ENCODE measurements at regions of chr13 and their contacts with region 1.

Region 1: GRCh38 chr13:41111454-41111853 is 21.1 kb downstream of the KBTBD6 start:
- DNase-seq: no peak
- ATAC-seq: no peak
- H3K4me3 ChIP-seq: no peak overlapping the region
- H3K27ac ChIP-seq: no peak overlapping the region
- H3K4me1 ChIP-seq: no peaks in the 10 kb centered on the region
- H3K27me3 ChIP-seq: no peaks in the 10 kb centered on the region
- CTCF ChIP-seq: no peak

Region 2: GRCh38 chr13:41203810-41204209 is 92.4 kb after region 1 on chr13:
- CTCF ChIA-PET with region 1: no interaction called
- POLR2A ChIA-PET with region 1: no interaction called
- intact Hi-C with region 1: no loop called
- DNase-seq: no peak
- ATAC-seq: no peak
- H3K4me3 ChIP-seq: no peak overlapping the region
- H3K27ac ChIP-seq: no peak overlapping the region
- H3K4me1 ChIP-seq: no peaks in the 10 kb centered on the region
- H3K27me3 ChIP-seq: no peaks in the 10 kb centered on the region
- CTCF ChIP-seq: no peak

Region 3: GRCh38 chr13:41216160-41216559 is 104.7 kb after region 1 on chr13:
- CTCF ChIA-PET with region 1: interaction called, 10 read pairs
- POLR2A ChIA-PET with region 1: no interaction called
- intact Hi-C with region 1: no loop called
- DNase-seq: peak; percentile 55
- ATAC-seq: peak; percentile 93
- H3K4me3 ChIP-seq: no peak overlapping the region
- H3K27ac ChIP-seq: peak overlapping the region; percentile 45; the same call in 1 of the 2 replicates
- H3K4me1 ChIP-seq: peaks cover 10% of the 10 kb centered on the region
- H3K27me3 ChIP-seq: no peaks in the 10 kb centered on the region
- CTCF ChIP-seq: no peak

Region 4: GRCh38 chr13:41944635-41945397 is 833.4 kb after region 1 on chr13:
- CTCF ChIA-PET with region 1: no interaction called
- POLR2A ChIA-PET with region 1: interaction called, 10 read pairs
- intact Hi-C with region 1: no loop called
- DNase-seq: peak; percentile 20
- ATAC-seq: peak; percentile 71
- H3K4me3 ChIP-seq: no peak overlapping the region
- H3K27ac ChIP-seq: no peak overlapping the region
- H3K4me1 ChIP-seq: peaks cover 8% of the 10 kb centered on the region; the same call in 1 of the 2 replicates
- H3K27me3 ChIP-seq: no peaks in the 10 kb centered on the region
- CTCF ChIP-seq: no peak